ENCODE measurements at regions of chr7 and their contacts with region 1.

Region 1: GRCh38 chr7:3673524-3673923 is 372.5 kb downstream of the SDK1 start:
- DNase-seq: peak; percentile 25 to 84
- H3K4me3 ChIP-seq: no peak overlapping the region
- H3K27ac ChIP-seq: no peak overlapping the region
- H3K4me1 ChIP-seq: no peaks in the 10 kb centered on the region
- H3K27me3 ChIP-seq: no peaks in the 10 kb centered on the region
- CTCF ChIP-seq: peak; percentile 75 to 81 (median 80)
- EP300 ChIP-seq: no peak
- POLR2A ChIP-seq: no peak
- RAD21 ChIP-seq: peak; percentile 69 to 79

Region 2: GRCh38 chr7:3657206-3657605 is 16.3 kb before region 1 on chr7:
- CTCF ChIA-PET with region 1: interaction called, 24 read pairs
- POLR2A ChIA-PET with region 1: no interaction called
- DNase-seq: no peak
- H3K4me3 ChIP-seq: no peak overlapping the region
- H3K27ac ChIP-seq: no peak overlapping the region
- H3K4me1 ChIP-seq: no peaks in the 10 kb centered on the region
- H3K27me3 ChIP-seq: peaks cover 0 to under 1% (median 0%) of the 10 kb centered on the region in 4 experiments; a peak in 2 of 7 replicates
- CTCF ChIP-seq: no peak
- EP300 ChIP-seq: no peak
- POLR2A ChIP-seq: no peak
- RAD21 ChIP-seq: no peak

Region 3: GRCh38 chr7:3697472-3697871 is 23.9 kb after region 1 on chr7:
- CTCF ChIA-PET with region 1: no interaction called
- POLR2A ChIA-PET with region 1: no interaction called
- DNase-seq: no peak
- H3K4me3 ChIP-seq: no peak overlapping the region
- H3K27ac ChIP-seq: no peak overlapping the region
- H3K4me1 ChIP-seq: peaks cover 0 to 3% (median 2%) of the 10 kb centered on the region in 4 experiments; a peak in 3 of 7 replicates
- H3K27me3 ChIP-seq: no peaks in the 10 kb centered on the region
- CTCF ChIP-seq: no peak
- EP300 ChIP-seq: no peak
- POLR2A ChIP-seq: no peak
- RAD21 ChIP-seq: no peak

Measured in H1 (cell line).